Esophagus squamous epithelium (tissue), 5 donors: ENCODE measurements at regions of chr12 and their contacts with region 1.

Region 1: GRCh38 chr12:4276524-4277204 is 3.1 kb downstream of the CCND2 start:
- DNase-seq: no peak
- H3K4me3 ChIP-seq: peak overlapping the region in 3 of 4 donors; percentile 12 to 94 (median 92)
- H3K27ac ChIP-seq: peak overlapping the region in 3 of 4 donors; percentile 92 to 97 (median 96)
- H3K4me1 ChIP-seq: peaks cover 27 to 99% (median 57%) of the 10 kb centered on the region in 3 donors
- H3K27me3 ChIP-seq: peaks cover 0 to 49% (median 0%) of the 10 kb centered on the region in 4 donors
- CTCF ChIP-seq: peak; percentile 88 to 94 (median 93)
- POLR2A ChIP-seq: no peak

Region 2: GRCh38 chr12:3885277-3886094 is 391.2 kb before region 1 on chr12:
- intact Hi-C with region 1: loop called (anchors 5 kb)
- DNase-seq: no peak
- H3K4me3 ChIP-seq: peak overlapping the region in 3 of 4 donors; percentile 24 to 52 (median 35)
- H3K27ac ChIP-seq: peak overlapping the region in 3 of 4 donors; percentile 53 to 74 (median 57)
- H3K4me1 ChIP-seq: peaks cover 0 to 12% (median 0%) of the 10 kb centered on the region in 3 donors
- H3K27me3 ChIP-seq: peaks cover 0 to 18% (median 0%) of the 10 kb centered on the region in 4 donors
- CTCF ChIP-seq: peak; percentile 62 to 84 (median 78)
- POLR2A ChIP-seq: no peak

Region 3: DNA sequence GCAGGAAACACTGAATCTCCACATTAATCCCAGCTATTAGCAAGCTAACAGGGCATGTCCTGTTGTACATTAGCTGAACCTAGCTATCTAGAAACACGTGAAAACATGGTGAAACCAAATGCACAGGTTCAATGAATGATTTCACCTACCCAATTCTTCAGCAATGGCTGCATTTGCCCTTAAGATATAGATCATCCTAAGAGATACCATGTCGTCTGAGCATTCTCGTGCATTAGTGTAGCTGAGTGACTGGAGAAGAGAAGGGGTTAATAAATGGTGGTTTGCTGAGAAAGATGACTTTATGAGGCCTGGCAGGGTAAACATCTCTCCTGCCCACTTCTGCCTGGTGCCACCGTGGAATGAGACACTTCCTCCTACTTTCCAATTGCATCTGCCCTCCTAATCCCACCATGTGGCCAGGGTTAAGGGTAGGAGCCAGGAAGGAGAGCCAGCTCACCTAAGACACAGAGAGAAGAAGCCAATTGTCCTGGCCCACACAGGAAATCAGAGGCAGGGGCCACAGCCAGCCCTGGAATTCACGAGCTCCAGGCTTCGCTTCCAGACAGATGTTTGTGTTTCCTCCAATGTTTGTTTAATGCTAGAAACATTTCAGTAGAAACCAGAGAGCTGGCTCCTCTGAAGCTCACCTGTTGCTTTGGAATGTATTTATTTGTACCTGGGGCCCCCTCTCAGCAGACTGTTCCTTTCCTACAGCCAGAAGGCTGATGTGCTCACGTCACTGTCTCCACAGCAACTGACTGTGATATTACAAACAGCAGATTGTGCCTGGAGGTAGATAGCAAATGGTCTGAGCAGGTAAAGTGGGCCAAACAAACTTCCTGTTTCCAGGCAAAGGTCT is 277.5 kb before region 1 on chr12:
- intact Hi-C with region 1: loop called (anchors 5 kb)
- DNase-seq: no peak
- H3K4me3 ChIP-seq: no peak overlapping the region
- H3K27ac ChIP-seq: no peak overlapping the region
- H3K4me1 ChIP-seq: peaks cover 0 to 8% (median 5%) of the 10 kb centered on the region in 3 donors
- H3K27me3 ChIP-seq: peaks cover 0 to 20% (median 0%) of the 10 kb centered on the region in 4 donors
- CTCF ChIP-seq: no peak
- POLR2A ChIP-seq: no peak

Region 4: DNA sequence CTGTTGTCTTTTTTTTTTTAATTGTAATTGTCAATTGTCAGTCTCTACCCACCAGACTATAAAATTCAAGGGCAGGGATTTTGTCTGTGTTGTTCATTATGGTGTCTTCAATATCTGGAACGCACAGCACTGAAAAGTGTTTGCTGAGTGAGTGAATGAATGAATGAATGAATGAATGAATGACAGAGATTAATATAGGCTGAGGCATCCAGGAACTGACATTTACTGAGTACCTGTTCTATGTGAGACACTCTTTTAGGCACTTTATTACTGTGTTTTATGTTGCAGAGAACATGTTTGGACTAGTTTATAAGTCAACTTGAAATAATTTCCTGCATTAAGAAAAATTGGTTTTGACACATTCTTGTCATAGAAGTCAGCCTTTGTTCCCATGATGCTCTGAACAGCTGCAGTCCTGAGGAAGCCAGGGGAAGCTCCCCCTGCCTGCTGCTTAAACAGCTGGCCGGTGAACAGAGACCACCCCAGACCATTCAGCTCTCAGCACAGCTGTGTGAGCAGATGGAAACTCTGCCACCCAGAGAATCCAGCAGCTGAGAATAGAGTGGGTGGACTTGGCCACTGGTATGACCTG is 163.8 kb before region 1 on chr12:
- intact Hi-C with region 1: loop called (anchors 5 kb)
- DNase-seq: no peak
- H3K4me3 ChIP-seq: no peak overlapping the region
- H3K27ac ChIP-seq: no peak overlapping the region
- H3K4me1 ChIP-seq: peaks cover 9 to 23% (median 10%) of the 10 kb centered on the region in 3 donors
- H3K27me3 ChIP-seq: peaks cover 0 to 29% (median 0%) of the 10 kb centered on the region in 4 donors
- CTCF ChIP-seq: no peak
- POLR2A ChIP-seq: no peak

Region 5: DNA sequence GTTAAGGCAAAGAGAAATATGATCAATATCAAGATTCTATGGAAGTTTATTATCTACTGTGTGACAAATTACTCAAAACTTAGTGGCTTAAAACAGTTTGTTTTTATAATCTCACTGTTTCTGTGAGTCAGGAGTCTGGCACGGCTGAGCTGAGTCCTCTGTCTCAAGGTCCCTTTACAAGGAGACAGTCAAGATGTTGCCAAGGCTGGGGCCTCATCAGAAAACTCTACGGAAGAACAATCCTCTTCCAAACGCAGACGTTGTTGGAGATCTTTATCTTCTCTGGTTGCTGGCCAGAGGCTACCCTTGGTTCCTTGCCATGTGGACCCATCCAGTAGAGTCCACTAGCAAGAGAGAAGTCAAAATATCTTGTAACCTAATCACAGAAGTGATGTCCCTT is 103.7 kb before region 1 on chr12:
- intact Hi-C with region 1: no loop called
- DNase-seq: no peak
- H3K4me3 ChIP-seq: no peak overlapping the region
- H3K27ac ChIP-seq: no peak overlapping the region
- H3K4me1 ChIP-seq: no peaks in the 10 kb centered on the region
- H3K27me3 ChIP-seq: peaks cover 0 to 21% (median 0%) of the 10 kb centered on the region in 4 donors
- CTCF ChIP-seq: no peak
- POLR2A ChIP-seq: no peak

Region 6: DNA sequence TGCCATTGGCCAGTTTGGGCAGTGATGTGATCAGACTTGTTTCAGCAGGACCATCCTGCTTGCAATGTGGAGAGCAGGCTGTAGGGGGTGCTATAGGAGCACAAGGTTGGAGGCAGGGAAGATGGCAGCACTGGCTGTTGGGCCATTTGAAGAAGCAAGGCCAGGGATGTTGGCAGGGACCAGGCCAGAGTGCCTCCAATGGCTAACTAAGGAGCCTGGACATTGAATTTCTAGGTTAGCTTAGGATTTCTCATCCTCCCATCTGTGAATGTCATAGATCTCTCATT is 79.3 kb after region 1 on chr12:
- intact Hi-C with region 1: no loop called
- DNase-seq: no peak
- H3K4me3 ChIP-seq: no peak overlapping the region
- H3K27ac ChIP-seq: no peak overlapping the region
- H3K4me1 ChIP-seq: no peaks in the 10 kb centered on the region
- H3K27me3 ChIP-seq: no peaks in the 10 kb centered on the region
- CTCF ChIP-seq: peak in 1 of 6 experiments; percentile 41
- POLR2A ChIP-seq: no peak